Motor neuron (in vitro differentiated cells): ENCODE measurements at regions of chr4 and their contacts with region 1.

Region 1: DNA sequence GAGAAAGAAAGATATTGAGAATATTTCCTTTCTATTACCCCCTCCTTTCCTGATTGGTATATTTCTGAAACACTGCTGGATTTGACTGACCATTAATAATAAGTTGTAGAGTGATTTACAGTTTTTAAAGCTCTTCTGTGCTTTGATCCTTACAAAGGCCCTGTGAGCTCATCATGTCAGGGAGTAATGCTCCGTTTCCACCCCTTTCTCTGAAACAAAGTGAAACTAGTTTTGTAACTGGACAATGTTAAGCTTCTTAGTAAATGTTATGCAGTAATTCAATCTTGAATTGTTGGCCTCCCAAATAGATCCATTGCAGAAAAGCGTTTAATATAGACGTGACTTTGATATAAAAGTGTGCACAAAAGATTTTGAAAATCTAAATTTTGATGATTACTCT is 190.1 kb upstream of the GNPDA2 start:
- ATAC-seq: peak in 7 of 8 experiments; percentile 34 to 97 (median 52)
- H3K4me3 ChIP-seq: no peak overlapping the region
- H3K27ac ChIP-seq: no peak overlapping the region
- H3K4me1 ChIP-seq: peaks cover 0 to 14% of the 10 kb centered on the region in 2 donors

Region 2: DNA sequence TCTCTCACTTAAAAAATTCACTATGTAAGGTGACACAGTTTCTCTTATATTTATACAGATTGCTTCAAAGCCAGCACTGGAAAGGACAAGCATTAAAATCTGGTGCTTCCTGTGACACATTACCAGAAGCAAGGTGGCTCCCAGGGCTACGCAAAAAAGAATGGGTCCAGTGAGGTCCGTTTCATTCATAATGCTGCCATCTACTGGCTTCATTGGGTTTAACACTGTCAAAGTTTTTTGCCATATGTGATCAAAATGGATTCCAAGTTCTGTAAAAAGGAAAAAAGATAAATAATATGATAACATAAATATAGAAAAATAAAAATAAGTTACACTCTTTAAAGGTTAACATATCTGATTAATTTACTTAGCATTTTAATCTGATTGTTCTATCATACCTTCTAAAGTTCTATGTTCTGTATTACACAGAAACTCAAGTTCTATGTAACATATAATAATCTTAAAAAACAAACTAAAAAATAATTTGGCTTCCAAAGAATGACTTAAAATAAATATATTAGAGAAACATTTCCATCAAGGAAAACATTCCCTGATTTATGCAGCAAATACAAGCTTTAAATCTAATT is 287.0 kb before region 1 on chr4:
- in situ Hi-C with region 1: no loop called
- ATAC-seq: peak; percentile 38 to 69 (median 62)
- H3K4me3 ChIP-seq: no peak overlapping the region
- H3K27ac ChIP-seq: no peak overlapping the region
- H3K4me1 ChIP-seq: no peaks in the 10 kb centered on the region

Region 3: DNA sequence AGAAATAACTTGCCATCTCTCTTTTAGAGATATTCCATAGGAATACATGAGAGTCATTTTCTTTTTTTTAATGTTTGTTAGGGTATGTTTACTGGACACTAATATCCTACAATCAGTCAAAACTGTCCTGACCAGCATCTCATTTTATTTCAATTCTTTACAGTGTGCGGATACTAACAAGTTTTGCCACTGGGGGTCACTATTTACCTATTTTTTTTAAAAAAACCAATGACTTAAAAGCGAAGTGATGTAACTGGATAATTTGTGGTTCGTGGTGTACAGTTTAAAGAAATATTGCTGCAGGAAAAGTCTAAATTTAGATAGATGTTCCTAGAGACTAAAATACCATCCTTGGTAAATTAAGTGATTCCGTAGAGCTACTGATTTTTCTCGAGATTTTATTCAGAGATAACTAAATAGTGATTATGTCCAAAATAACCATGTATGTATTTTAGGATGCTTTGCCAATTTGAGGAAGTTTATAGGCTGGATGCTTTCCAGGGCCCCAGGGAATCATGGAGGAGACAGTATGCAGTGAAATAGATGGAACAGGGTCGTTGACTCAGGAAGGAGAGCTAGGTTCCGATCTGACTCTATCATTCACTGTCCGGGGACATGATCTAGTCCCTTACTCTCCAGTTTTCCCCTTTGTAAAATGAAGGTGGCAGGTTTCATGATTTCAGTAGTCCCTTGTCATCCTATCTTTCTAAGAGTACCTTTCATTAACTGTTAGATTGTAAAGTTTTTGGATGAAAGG is 156.1 kb before region 1 on chr4:
- in situ Hi-C with region 1: loop called in 1 of 9 experiments (anchors 25 kb)
- ATAC-seq: peak; percentile 61 to 84 (median 72)
- H3K4me3 ChIP-seq: no peak overlapping the region
- H3K27ac ChIP-seq: no peak overlapping the region
- H3K4me1 ChIP-seq: peaks cover 0 to 4% of the 10 kb centered on the region in 2 donors